ENCODE measurements at regions of chr5 and their contacts with region 1.

Region 1: GRCh38 chr5:170302653-170303501 is 5.3 kb upstream of the LCP2 start:
- DNase-seq: peak; percentile 28 to 96 (median 68)
- ATAC-seq: peak; percentile 90
- H3K4me3 ChIP-seq: peak overlapping the region; percentile 42 to 60
- H3K4me3 Mint-ChIP-seq: peak overlapping the region; percentile 86
- H3K27ac ChIP-seq: peak overlapping the region; percentile 46 to 69
- H3K27ac Mint-ChIP-seq: peak overlapping the region; percentile 96
- H3K4me1 ChIP-seq: peaks cover 65% of the 10 kb centered on the region
- H3K4me1 Mint-ChIP-seq: peaks cover 84% of the 10 kb centered on the region
- H3K27me3 ChIP-seq: no peaks in the 10 kb centered on the region
- H3K27me3 Mint-ChIP-seq: no peaks in the 10 kb centered on the region
- CTCF ChIP-seq: peak; percentile 27

Region 2: GRCh38 chr5:170319301-170319700 is 16.4 kb after region 1 on chr5:
- CTCF ChIA-PET with region 1: interaction called, 5 read pairs
- POLR2A ChIA-PET with region 1: interaction called, 10 read pairs
- intact Hi-C with region 1: no loop called
- DNase-seq: no peak
- ATAC-seq: peak; percentile 58
- H3K4me3 ChIP-seq: no peak overlapping the region
- H3K4me3 Mint-ChIP-seq: no peak overlapping the region
- H3K27ac ChIP-seq: no peak overlapping the region
- H3K27ac Mint-ChIP-seq: peak overlapping the region; percentile 32
- H3K4me1 ChIP-seq: peaks cover 13% of the 10 kb centered on the region
- H3K4me1 Mint-ChIP-seq: peaks cover 42% of the 10 kb centered on the region
- H3K27me3 ChIP-seq: no peaks in the 10 kb centered on the region
- H3K27me3 Mint-ChIP-seq: no peaks in the 10 kb centered on the region
- CTCF ChIP-seq: no peak

Measured in CD8-positive, alpha-beta T cell (primary cell).